AG04450 (cell line): ENCODE measurements at regions of chr5 and their contacts with region 1.

Region 1: GRCh38 chr5:7886849-7887475 is 18.0 kb downstream of the MTRR start:
- DNase-seq: no peak
- H3K4me3 ChIP-seq: no peak overlapping the region
- H3K27ac ChIP-seq: no peak overlapping the region
- H3K27me3 ChIP-seq: no peaks in the 10 kb centered on the region
- CTCF ChIP-seq: peak; percentile 63

Region 2: GRCh38 chr5:7868773-7869473 is 18.0 kb before region 1 on chr5 and contains the starts of genes FASTKD3 and MTRR:
- CTCF ChIA-PET with region 1: interaction called, 102 read pairs
- POLR2A ChIA-PET with region 1: interaction called, 5 read pairs
- DNase-seq: peak; percentile 81
- H3K4me3 ChIP-seq: peak within 1 kb of the TSS; percentile 85
- H3K27ac ChIP-seq: no peak within 1 kb of the TSS
- H3K27me3 ChIP-seq: no peaks in the 10 kb centered on the region
- CTCF ChIP-seq: no peak
- polyA plus RNA-seq, gene FASTKD3: 9.2 and 12.8 TPM in 2 replicates
- polyA plus RNA-seq, gene MTRR: 44.1 and 50.0 TPM in 2 replicates

Region 3: DNA sequence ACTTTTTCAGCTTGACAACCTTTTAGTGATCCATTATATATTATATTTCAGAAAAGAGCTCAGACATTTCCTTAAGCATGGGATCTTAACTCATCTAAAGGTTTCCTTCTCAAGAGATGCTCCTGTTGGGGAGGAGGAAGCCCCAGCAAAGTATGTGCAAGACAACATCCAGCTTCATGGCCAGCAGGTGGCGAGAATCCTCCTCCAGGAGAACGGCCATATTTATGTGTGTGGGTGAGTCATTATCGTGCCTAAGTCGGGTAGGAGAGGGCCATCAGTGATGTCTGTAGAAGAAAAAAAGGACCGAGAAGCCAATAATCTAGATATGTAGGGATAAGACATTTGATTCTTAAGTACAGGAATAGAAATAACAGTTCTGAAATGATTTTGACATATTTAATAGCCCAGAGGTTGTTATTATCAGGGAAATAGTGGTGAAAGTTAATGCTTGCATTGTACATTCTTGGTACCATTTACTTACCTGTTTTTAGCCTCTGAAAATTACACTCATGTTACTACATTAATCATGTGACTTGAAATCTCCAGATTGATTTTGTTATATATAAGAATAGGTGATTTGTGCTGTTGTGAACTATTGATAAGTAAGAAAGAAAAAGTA is 10.2 kb after region 1 on chr5:
- CTCF ChIA-PET with region 1: interaction called, 28 read pairs
- POLR2A ChIA-PET with region 1: no interaction called
- DNase-seq: no peak
- H3K4me3 ChIP-seq: no peak overlapping the region
- H3K27ac ChIP-seq: no peak overlapping the region
- H3K27me3 ChIP-seq: no peaks in the 10 kb centered on the region
- CTCF ChIP-seq: peak; percentile 54

Region 4: GRCh38 chr5:7904170-7904569 is 17.2 kb after region 1 on chr5:
- CTCF ChIA-PET with region 1: interaction called, 19 read pairs
- POLR2A ChIA-PET with region 1: no interaction called
- DNase-seq: peak; percentile 15
- H3K4me3 ChIP-seq: no peak overlapping the region
- H3K27ac ChIP-seq: no peak overlapping the region
- H3K27me3 ChIP-seq: no peaks in the 10 kb centered on the region
- CTCF ChIP-seq: no peak

Region 5: DNA sequence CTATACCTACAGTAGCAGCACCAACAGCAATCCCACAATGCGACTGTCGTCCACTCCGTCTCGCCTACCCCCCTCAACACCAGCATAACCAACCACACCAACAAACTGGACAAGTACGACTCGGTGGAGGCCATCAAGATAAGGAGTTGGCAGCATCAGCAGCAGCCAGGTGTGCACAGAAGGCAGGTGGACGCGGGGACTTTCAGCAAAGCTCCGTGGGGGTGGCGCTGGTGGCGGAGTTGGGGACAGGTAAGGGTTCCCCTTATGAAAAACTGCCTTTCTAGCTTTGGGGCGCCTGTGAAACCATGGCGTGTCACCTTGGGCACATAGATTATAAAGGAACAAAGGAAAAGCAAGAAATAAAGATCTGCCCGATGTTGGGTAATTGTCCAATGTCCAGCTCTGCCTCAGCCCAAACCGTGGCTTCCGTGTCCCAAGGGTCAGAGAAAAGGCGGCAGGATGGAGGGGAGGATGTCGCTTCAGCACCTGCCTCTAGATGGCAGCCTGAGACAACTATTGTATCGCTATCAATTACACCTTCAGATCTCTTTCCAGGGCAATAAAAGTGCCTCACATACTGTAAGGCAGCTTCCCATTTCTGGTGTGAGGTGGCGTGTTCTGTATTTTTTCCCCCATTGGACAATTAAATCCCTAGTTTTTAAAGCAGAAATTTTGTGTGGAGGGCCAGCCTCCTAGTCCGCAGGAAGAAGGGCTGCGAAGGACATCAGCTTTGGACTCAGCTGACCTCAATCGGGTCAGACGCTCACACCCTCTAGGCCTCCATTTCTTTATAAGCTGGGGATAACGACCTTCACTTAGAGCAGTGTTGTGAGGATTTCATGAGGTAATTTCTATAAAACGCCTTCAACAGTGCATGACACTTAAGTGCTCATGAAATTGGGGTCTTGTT is 40.8 kb after region 1 on chr5:
- CTCF ChIA-PET with region 1: interaction called, 32 read pairs
- POLR2A ChIA-PET with region 1: no interaction called
- DNase-seq: peak; percentile 8
- H3K4me3 ChIP-seq: no peak overlapping the region
- H3K27ac ChIP-seq: no peak overlapping the region
- H3K27me3 ChIP-seq: peaks cover 5% of the 10 kb centered on the region
- CTCF ChIP-seq: peak; percentile 82

Region 6: DNA sequence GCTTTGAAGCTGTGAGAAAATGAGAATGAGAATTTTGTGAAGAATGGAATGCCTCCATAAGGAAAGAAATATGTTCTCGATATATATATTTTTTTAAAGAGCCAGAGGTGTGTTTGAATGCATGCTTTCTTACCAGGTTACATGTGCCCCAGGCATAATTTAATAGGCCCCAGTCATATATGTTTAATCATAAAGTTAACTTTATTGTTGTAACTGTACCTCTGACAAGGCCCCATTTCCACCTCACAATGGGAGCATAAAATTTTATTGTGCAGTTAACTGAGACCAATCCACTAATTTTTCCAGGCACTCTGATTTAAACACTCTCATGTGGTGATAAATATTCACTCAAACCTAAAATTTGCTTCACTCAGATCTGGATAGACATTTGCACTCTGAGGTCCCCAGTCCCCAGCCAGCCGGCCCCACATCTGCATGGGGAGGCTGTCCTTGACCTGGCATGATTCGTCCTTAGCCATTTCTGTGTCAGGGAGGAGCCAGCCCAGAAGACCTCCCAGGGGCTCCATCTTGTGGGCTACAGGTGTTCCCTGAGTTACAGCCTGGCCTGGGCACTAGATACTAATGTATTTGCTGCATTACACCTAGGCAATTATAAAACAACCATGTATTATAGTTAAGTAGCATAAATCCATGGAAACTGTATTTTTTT is 227.8 kb after region 1 on chr5:
- CTCF ChIA-PET with region 1: no interaction called
- POLR2A ChIA-PET with region 1: no interaction called
- DNase-seq: no peak
- H3K4me3 ChIP-seq: no peak overlapping the region
- H3K27ac ChIP-seq: no peak overlapping the region
- H3K27me3 ChIP-seq: no peaks in the 10 kb centered on the region
- CTCF ChIP-seq: no peak

Region 7: GRCh38 chr5:8340739-8341344 is 453.9 kb after region 1 on chr5:
- CTCF ChIA-PET with region 1: interaction called, 10 read pairs
- POLR2A ChIA-PET with region 1: no interaction called
- DNase-seq: no peak
- H3K4me3 ChIP-seq: no peak overlapping the region
- H3K27ac ChIP-seq: no peak overlapping the region
- H3K27me3 ChIP-seq: peaks cover 2% of the 10 kb centered on the region
- CTCF ChIP-seq: peak; percentile 76